ENCODE measurements at regions of chr9 and their contacts with region 1.

Region 1: GRCh38 chr9:27276193-27277030 is 20.5 kb downstream of the EQTN start:
- DNase-seq: peak; percentile 5
- H3K4me3 Mint-ChIP-seq: no peak overlapping the region
- H3K27ac Mint-ChIP-seq: no peak overlapping the region
- H3K4me1 Mint-ChIP-seq: no peaks in the 10 kb centered on the region
- H3K27me3 Mint-ChIP-seq: peaks cover 6% of the 10 kb centered on the region
- CTCF ChIP-seq: no peak

Region 2: DNA sequence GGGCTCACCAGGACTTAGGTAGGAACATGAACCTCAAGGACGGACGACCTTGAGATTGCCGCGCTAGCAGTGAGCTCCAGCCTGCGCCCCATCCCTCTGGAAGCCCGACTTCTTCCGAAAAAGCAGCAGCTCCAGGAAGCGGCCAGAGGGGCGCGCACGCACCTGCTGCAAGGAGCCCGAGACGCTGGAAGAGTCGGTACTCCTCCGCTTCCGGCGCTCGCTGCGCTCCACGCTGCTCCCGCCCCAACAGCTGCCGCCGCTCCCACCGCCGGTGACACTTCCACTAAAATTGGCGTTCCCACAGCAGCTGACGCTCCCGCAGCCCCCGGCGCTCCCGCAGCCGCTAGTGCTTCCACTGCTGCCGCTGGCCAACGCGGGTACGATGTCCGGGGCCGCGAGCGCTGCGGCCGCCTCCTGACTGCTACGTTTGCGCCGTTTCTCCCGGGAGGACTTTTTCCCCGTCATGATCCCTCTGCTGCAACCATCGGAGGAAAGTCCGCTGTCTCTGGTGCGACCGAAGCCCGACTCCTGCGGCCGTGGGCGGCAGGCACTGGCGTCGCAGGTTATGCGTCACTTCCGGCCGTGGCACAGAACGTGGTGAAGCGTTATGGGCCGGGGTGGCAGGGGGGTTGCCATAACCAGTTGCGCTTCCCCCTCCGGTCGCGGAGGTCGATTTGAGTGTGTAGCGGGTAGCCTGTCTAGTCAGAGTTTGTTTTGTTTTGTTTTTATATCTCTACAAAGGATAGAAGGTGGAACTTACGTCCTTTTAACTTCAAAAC is 384.0 kb before region 1 on chr9 and contains the start of gene CAAP1:
- CTCF ChIA-PET with region 1: no interaction called
- intact Hi-C with region 1: no loop called
- DNase-seq: peak; percentile 88
- H3K4me3 Mint-ChIP-seq: peak within 1 kb of the TSS; percentile 100
- H3K27ac Mint-ChIP-seq: peak within 1 kb of the TSS; percentile 100
- H3K4me1 Mint-ChIP-seq: peaks cover 10% of the 10 kb centered on the region
- H3K27me3 Mint-ChIP-seq: no peaks in the 10 kb centered on the region
- CTCF ChIP-seq: peak; percentile 27
- total RNA-seq, gene CAAP1: 12.5 and 14.9 TPM in 2 replicates

Region 3: DNA sequence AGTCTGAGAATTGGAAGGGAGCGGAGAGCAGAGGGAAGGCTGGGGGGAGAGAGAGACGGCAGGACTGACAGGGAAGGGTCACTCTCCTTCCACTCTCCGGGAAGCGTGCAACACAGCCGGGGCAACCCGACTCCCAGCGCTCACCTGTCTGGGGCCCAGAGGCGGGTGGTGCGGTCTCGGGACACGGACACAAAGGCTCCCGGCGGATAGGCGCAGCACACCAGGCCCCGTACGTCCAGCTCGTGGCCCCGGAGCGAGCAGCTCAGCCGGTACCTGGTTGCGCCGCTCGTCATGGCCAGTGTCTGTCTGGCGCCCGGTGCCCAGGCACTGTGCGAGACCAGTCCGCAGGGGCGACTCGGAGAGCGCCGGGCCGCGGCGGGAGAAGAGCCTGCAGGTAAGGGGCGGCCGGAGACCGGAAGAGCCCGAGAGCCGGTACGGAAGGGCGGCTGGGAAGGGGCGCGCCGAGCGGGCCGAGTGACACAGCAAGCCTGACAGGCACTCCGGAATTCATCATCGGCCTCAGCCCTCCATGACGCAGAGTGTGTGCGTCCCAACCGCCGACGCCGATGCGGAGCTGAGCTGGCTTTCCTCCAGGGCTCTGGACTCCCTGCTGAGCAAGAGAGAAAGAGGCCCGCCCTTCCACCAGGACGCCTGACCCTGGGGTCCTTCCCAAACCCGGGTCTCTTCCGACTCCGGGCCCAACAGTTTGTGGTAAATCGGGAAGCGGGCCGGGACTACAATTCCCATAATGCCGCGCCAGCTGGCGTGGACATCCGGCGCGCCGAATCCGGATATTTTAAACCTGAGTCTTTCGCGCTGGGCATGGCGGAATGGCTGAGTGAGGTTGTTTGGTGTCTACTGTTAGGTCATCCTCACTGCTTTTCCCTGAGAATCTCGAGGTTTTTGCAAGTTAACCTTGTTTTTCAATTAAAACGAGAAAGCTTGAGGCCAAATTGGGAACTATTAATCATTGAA is 329.4 kb before region 1 on chr9 and contains the start of gene PLAA:
- CTCF ChIA-PET with region 1: no interaction called
- intact Hi-C with region 1: loop called (anchors 5 kb)
- DNase-seq: peak; percentile 81
- H3K4me3 Mint-ChIP-seq: peak within 1 kb of the TSS; percentile 63
- H3K27ac Mint-ChIP-seq: peak within 1 kb of the TSS; percentile 99
- H3K4me1 Mint-ChIP-seq: peaks cover 26% of the 10 kb centered on the region
- H3K27me3 Mint-ChIP-seq: no peaks in the 10 kb centered on the region
- CTCF ChIP-seq: no peak
- total RNA-seq, gene PLAA: 27.9 and 28.1 TPM in 2 replicates

Region 4: GRCh38 chr9:27033823-27034403 is 242.5 kb before region 1 on chr9:
- CTCF ChIA-PET with region 1: no interaction called
- intact Hi-C with region 1: loop called (anchors 1 kb)
- DNase-seq: peak; percentile 49
- H3K4me3 Mint-ChIP-seq: no peak overlapping the region
- H3K27ac Mint-ChIP-seq: no peak overlapping the region
- H3K4me1 Mint-ChIP-seq: no peaks in the 10 kb centered on the region
- H3K27me3 Mint-ChIP-seq: no peaks in the 10 kb centered on the region
- CTCF ChIP-seq: peak; percentile 28

Region 5: GRCh38 chr9:27151693-27152402 is 124.6 kb before region 1 on chr9:
- CTCF ChIA-PET with region 1: no interaction called
- intact Hi-C with region 1: no loop called
- DNase-seq: no peak
- H3K4me3 Mint-ChIP-seq: no peak overlapping the region
- H3K27ac Mint-ChIP-seq: no peak overlapping the region
- H3K4me1 Mint-ChIP-seq: peaks cover 5% of the 10 kb centered on the region
- H3K27me3 Mint-ChIP-seq: no peaks in the 10 kb centered on the region
- CTCF ChIP-seq: no peak

Region 6: GRCh38 chr9:27247756-27248155 is 28.7 kb before region 1 on chr9:
- CTCF ChIA-PET with region 1: interaction called, 5 read pairs
- intact Hi-C with region 1: loop called (anchors 1 kb)
- DNase-seq: peak; percentile 63
- H3K4me3 Mint-ChIP-seq: no peak overlapping the region
- H3K27ac Mint-ChIP-seq: peak overlapping the region; percentile 24
- H3K4me1 Mint-ChIP-seq: peaks cover 17% of the 10 kb centered on the region
- H3K27me3 Mint-ChIP-seq: no peaks in the 10 kb centered on the region
- CTCF ChIP-seq: peak; percentile 55

Region 7: DNA sequence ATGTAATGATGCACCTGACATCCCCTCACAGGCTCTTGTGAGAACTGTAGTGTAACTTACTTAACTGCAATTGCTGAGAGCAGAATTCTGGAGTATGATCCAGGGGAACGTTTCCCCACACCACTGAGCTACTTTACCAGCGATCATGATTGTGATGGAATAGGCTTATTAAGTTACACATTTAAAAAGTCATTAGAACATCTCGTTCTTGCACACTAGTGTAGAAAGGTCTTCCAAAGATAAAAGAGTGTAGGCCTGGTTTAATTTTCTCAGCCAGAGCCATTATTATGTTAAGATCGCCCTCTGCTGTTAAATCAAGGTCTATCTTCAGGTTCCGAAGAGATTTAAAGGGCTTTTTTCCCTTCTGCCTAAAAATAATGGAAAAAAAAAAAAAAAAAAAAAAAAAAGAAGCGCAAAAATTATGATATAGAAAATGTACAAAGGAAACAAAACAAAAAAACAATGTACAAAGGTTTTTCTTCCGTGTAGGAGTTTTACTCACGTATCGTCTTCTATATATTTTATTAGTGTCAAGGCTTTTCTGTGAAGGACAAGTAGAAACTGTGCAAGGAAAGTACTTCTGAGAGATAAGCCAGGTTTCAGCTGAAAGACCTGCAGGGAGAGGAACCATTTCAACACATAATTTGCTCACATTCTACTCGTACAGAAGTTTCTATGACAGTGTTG is 271.8 kb after region 1 on chr9:
- CTCF ChIA-PET with region 1: no interaction called
- intact Hi-C with region 1: loop called (anchors 10 kb)
- DNase-seq: no peak
- H3K4me3 Mint-ChIP-seq: no peak overlapping the region
- H3K27ac Mint-ChIP-seq: no peak overlapping the region
- H3K4me1 Mint-ChIP-seq: no peaks in the 10 kb centered on the region
- H3K27me3 Mint-ChIP-seq: no peaks in the 10 kb centered on the region
- CTCF ChIP-seq: no peak

Measured in Calu3 (cell line).